ENCODE measurements at regions of chr19 and their contacts with region 1.

Region 1: GRCh38 chr19:2269244-2269947 is 12.6 kb downstream of the PEAK3 start:
- DNase-seq: peak; percentile 99
- H3K4me3 ChIP-seq: peak overlapping the region; percentile 68 to 97 (median 92)
- H3K27ac ChIP-seq: peak overlapping the region; percentile 98 to 99 (median 98)
- H3K4me1 ChIP-seq: peaks cover 0 to 54% (median 50%) of the 10 kb centered on the region in 4 donors
- H3K27me3 ChIP-seq: no peaks in the 10 kb centered on the region
- CTCF ChIP-seq: peak in 2 of 4 experiments; percentile 5 to 39
- EP300 ChIP-seq: no peak
- POLR2A ChIP-seq: peak; percentile 100

Region 2: GRCh38 chr19:947265-948036 is 1321.9 kb before region 1 on chr19:
- intact Hi-C with region 1: no loop called
- DNase-seq: peak; percentile 87
- H3K4me3 ChIP-seq: no peak overlapping the region
- H3K27ac ChIP-seq: no peak overlapping the region
- H3K4me1 ChIP-seq: peaks cover 0 to 20% (median under 1%) of the 10 kb centered on the region in 4 donors
- H3K27me3 ChIP-seq: no peaks in the 10 kb centered on the region
- CTCF ChIP-seq: no peak
- EP300 ChIP-seq: peak in 1 of 4 donors; percentile 21
- POLR2A ChIP-seq: no peak

Region 3: GRCh38 chr19:2167896-2168618 is 101.3 kb before region 1 on chr19:
- intact Hi-C with region 1: loop called (anchors 1 kb)
- DNase-seq: peak; percentile 78
- H3K4me3 ChIP-seq: peak overlapping the region in 2 of 4 donors; percentile 7 to 17
- H3K27ac ChIP-seq: peak overlapping the region; percentile 91 to 100 (median 97)
- H3K4me1 ChIP-seq: peaks cover 0 to 87% (median 80%) of the 10 kb centered on the region in 4 donors
- H3K27me3 ChIP-seq: no peaks in the 10 kb centered on the region
- CTCF ChIP-seq: no peak
- EP300 ChIP-seq: peak in 1 of 4 donors; percentile 57
- POLR2A ChIP-seq: no peak

Region 4: GRCh38 chr19:2294611-2295335 is 25.4 kb after region 1 on chr19:
- intact Hi-C with region 1: loop called (anchors 2 kb)
- DNase-seq: peak; percentile 84
- H3K4me3 ChIP-seq: peak overlapping the region in 3 of 4 donors; percentile 14 to 33 (median 26)
- H3K27ac ChIP-seq: peak overlapping the region; percentile 18 to 81 (median 77)
- H3K4me1 ChIP-seq: peaks cover 0 to 46% (median 41%) of the 10 kb centered on the region in 4 donors
- H3K27me3 ChIP-seq: peaks cover 22 to 34% (median 30%) of the 10 kb centered on the region in 3 donors
- CTCF ChIP-seq: no peak
- EP300 ChIP-seq: peak in 3 of 4 donors; percentile 40 to 84 (median 68)
- POLR2A ChIP-seq: no peak

Region 5: DNA sequence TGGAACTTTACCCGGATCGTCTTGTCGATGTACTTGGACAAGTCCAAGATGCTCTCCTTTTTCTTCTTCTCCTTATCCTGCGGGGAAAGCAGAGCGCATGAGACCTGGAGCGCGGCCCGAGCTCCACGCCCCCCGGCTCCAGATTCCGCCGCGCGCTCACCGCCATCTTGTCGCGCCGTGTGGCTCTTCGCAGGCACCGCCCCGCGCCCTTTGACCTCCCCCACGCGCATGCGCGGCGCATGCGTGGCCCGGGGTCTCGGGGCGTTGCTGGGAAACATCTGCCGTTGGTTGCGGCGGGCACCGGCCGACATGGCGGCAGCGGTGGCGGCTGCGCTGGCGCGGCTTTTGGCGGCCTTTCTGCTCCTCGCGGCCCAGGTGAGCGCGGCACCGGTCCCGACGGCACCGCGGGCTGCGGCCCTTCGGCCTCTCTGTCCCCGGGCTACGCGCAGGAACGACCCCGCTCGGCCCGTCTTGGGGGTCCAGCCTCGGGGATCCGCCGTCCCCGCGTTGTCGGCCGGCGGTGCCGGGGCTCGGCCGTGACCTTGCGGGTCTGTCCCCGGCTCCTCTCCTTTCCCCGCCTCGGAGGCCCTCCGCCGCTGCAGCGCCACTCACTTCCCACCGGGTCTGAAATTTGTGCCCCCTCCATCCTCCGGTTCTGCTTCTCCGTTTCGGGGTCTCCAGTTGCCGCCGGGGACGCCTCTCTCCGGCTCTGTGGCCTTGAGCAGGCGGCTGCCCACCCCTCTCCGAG is 59.2 kb after region 1 on chr19 and contains the starts of genes LSM7 and SPPL2B:
- intact Hi-C with region 1: loop called (anchors 5 kb)
- DNase-seq: peak; percentile 95
- H3K4me3 ChIP-seq: peak within 1 kb of the TSS; percentile 80 to 98 (median 90)
- H3K27ac ChIP-seq: peak within 1 kb of the TSS; percentile 73 to 88 (median 82)
- H3K4me1 ChIP-seq: peaks cover 0 to 65% (median 57%) of the 10 kb centered on the region in 4 donors
- H3K27me3 ChIP-seq: no peaks in the 10 kb centered on the region
- CTCF ChIP-seq: no peak
- EP300 ChIP-seq: no peak
- POLR2A ChIP-seq: peak; percentile 34 to 59
- total RNA-seq, gene LSM7: 51.5 to 139 (median 100) TPM
- total RNA-seq, gene SPPL2B: 14.6 to 47.4 (median 24.0) TPM

Region 6: DNA sequence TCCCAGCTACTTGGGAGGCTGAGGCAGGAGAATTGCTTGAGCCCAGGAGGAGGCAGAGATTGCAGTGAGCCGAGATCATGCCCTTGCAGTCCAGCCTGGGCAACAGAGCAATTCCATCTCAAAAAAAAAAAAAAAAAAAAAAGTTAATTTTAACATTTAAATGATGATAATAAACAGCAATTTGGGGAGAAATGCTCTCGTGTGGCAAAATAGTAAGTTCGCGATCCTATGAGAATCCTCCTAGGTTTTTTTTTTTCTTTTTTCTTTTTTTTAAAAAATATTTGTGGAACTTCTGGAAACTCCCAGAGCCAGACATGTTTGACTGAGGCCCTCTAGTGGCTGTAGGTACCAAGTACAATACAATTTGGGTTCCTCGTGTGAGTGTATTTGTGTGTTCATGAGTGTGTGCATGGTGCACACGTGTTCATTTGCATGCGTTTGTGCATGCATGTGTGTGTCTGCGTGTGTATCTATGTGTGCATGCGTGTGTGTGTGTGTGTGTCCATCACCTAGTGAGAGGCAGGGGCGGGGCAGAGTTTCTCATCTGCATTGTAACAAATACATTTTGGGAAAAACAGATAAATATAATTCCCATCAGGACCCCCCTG is 121.8 kb after region 1 on chr19:
- intact Hi-C with region 1: loop called (anchors 2 kb)
- DNase-seq: no peak
- H3K4me3 ChIP-seq: no peak overlapping the region
- H3K27ac ChIP-seq: no peak overlapping the region
- H3K4me1 ChIP-seq: no peaks in the 10 kb centered on the region
- H3K27me3 ChIP-seq: peaks cover 0 to 19% (median 4%) of the 10 kb centered on the region in 3 donors
- CTCF ChIP-seq: peak; percentile 59 to 82 (median 76)
- EP300 ChIP-seq: no peak
- POLR2A ChIP-seq: no peak